ENCODE measurements at regions of chr5 and their contacts with region 1.

Region 1: GRCh38 chr5:175729829-175730277 is 72.0 kb downstream of the HRH2 start:
- DNase-seq: peak; percentile 78
- H3K4me3 Mint-ChIP-seq: no peak overlapping the region
- H3K27ac Mint-ChIP-seq: no peak overlapping the region
- H3K4me1 Mint-ChIP-seq: no peaks in the 10 kb centered on the region
- H3K27me3 Mint-ChIP-seq: peaks cover 7% of the 10 kb centered on the region

Region 2: DNA sequence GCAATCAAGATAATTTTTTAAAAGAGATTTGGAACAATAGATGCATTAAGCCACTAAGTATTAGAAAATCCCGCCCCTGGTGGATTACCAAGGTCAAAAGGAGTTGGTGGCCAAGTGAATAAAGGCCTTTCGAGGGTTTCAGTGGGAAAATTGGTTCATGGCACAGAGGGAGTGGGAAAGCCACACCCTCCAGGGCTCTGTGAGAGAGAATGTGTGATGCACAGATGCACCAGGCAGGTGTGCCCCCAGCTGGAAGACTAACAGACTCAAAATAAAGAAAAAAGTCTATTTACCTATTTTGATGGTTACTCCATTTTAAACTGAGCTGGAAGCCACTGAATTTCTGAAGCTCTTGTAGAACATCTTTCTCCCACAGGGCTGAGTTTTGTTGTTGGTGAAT is 563.8 kb before region 1 on chr5:
- intact Hi-C with region 1: no loop called
- DNase-seq: no peak
- H3K4me3 Mint-ChIP-seq: no peak overlapping the region
- H3K27ac Mint-ChIP-seq: no peak overlapping the region
- H3K4me1 Mint-ChIP-seq: no peaks in the 10 kb centered on the region
- H3K27me3 Mint-ChIP-seq: no peaks in the 10 kb centered on the region

Region 3: DNA sequence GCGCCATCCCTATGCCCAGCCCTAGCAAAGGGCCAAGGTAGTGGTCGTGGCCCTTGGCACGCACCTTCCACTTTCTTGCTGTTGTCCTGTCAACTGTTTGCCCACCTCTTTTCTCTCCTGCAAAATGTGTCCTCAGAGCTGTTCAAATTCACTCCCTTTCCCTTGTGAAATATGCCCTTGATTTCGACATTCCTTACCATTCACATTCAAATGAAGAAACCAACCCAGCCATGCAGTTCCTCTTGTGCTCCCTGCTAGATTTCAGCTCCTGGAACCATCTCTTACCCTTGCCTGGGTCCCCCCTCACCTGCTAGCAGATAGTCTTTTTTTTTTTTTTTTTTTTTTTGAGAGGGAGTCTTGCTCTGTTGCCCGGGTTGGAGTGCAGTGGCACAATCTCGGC is 91.5 kb before region 1 on chr5:
- intact Hi-C with region 1: no loop called
- DNase-seq: no peak
- H3K4me3 Mint-ChIP-seq: no peak overlapping the region
- H3K27ac Mint-ChIP-seq: no peak overlapping the region
- H3K4me1 Mint-ChIP-seq: peaks cover 18% of the 10 kb centered on the region
- H3K27me3 Mint-ChIP-seq: peaks cover 6% of the 10 kb centered on the region

Region 4: GRCh38 chr5:175696139-175696854 is 33.6 kb before region 1 on chr5:
- intact Hi-C with region 1: no loop called
- DNase-seq: peak; percentile 70
- H3K4me3 Mint-ChIP-seq: peak overlapping the region; percentile 13
- H3K27ac Mint-ChIP-seq: peak overlapping the region; percentile 80
- H3K4me1 Mint-ChIP-seq: peaks cover 29% of the 10 kb centered on the region
- H3K27me3 Mint-ChIP-seq: no peaks in the 10 kb centered on the region

Region 5: GRCh38 chr5:175821790-175822211 is 91.9 kb after region 1 on chr5:
- intact Hi-C with region 1: no loop called
- DNase-seq: no peak
- H3K4me3 Mint-ChIP-seq: peak overlapping the region; percentile 2
- H3K27ac Mint-ChIP-seq: peak overlapping the region; percentile 69
- H3K4me1 Mint-ChIP-seq: peaks cover 13% of the 10 kb centered on the region
- H3K27me3 Mint-ChIP-seq: peaks cover 1% of the 10 kb centered on the region

Region 6: GRCh38 chr5:175895215-175896102 is 165.6 kb after region 1 on chr5:
- intact Hi-C with region 1: loop called (anchors 5 kb)
- DNase-seq: peak; percentile 59
- H3K4me3 Mint-ChIP-seq: peak overlapping the region; percentile 41
- H3K27ac Mint-ChIP-seq: no peak overlapping the region
- H3K4me1 Mint-ChIP-seq: peaks cover 24% of the 10 kb centered on the region
- H3K27me3 Mint-ChIP-seq: peaks cover 42% of the 10 kb centered on the region